Caco-2 (cell line): ENCODE measurements at regions of chr16 and their contacts with region 1.

Region 1: GRCh38 chr16:27367461-27368357 is 34.3 kb upstream of the IL21R start:
- DNase-seq: peak; percentile 75 to 78
- H3K4me3 ChIP-seq: no peak overlapping the region
- H3K4me3 Mint-ChIP-seq: peak overlapping the region; percentile 7
- H3K27ac Mint-ChIP-seq: no peak overlapping the region
- H3K4me1 ChIP-seq: peaks cover 30% of the 10 kb centered on the region
- H3K4me1 Mint-ChIP-seq: peaks cover 20% of the 10 kb centered on the region
- H3K27me3 ChIP-seq: no peaks in the 10 kb centered on the region
- H3K27me3 Mint-ChIP-seq: no peaks in the 10 kb centered on the region
- CTCF ChIP-seq: peak; percentile 72 to 81

Region 2: DNA sequence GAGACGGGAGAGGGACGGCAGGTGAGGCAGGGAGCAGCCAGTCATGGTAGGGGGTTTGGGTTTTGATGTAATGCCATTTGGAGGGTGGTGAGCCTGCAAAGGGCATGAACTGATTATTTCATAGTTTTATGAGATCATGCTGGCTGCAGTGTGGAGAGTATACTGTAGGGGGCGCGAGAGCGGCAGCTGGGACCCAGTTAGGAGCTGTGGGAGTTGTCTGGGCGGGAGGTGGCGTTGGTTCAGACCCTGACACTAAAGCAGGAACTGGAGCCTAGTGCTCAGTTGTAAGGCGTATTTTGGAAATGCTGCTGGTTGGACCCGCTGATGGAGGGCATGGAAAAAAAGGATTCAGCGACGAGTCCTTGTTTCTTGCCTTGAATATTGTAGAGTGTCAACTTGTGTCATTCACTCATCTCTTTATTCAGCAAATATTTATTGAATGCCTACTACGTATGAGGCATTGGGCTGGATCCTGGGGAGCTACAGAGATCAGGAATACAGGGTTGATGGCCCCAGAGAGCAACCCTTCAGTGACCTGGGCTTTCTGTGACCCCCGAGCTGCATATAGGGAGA is 188.1 kb before region 1 on chr16:
- CTCF ChIA-PET with region 1: interaction called, 12 read pairs
- POLR2A ChIA-PET with region 1: no interaction called
- intact Hi-C with region 1: no loop called
- DNase-seq: peak; percentile 52 to 57
- H3K4me3 ChIP-seq: no peak overlapping the region
- H3K4me3 Mint-ChIP-seq: no peak overlapping the region
- H3K27ac Mint-ChIP-seq: no peak overlapping the region
- H3K4me1 ChIP-seq: peaks cover 5% of the 10 kb centered on the region
- H3K4me1 Mint-ChIP-seq: peaks cover 5% of the 10 kb centered on the region
- H3K27me3 ChIP-seq: no peaks in the 10 kb centered on the region
- H3K27me3 Mint-ChIP-seq: peaks cover 10% of the 10 kb centered on the region
- CTCF ChIP-seq: peak; percentile 57 to 60

Region 3: DNA sequence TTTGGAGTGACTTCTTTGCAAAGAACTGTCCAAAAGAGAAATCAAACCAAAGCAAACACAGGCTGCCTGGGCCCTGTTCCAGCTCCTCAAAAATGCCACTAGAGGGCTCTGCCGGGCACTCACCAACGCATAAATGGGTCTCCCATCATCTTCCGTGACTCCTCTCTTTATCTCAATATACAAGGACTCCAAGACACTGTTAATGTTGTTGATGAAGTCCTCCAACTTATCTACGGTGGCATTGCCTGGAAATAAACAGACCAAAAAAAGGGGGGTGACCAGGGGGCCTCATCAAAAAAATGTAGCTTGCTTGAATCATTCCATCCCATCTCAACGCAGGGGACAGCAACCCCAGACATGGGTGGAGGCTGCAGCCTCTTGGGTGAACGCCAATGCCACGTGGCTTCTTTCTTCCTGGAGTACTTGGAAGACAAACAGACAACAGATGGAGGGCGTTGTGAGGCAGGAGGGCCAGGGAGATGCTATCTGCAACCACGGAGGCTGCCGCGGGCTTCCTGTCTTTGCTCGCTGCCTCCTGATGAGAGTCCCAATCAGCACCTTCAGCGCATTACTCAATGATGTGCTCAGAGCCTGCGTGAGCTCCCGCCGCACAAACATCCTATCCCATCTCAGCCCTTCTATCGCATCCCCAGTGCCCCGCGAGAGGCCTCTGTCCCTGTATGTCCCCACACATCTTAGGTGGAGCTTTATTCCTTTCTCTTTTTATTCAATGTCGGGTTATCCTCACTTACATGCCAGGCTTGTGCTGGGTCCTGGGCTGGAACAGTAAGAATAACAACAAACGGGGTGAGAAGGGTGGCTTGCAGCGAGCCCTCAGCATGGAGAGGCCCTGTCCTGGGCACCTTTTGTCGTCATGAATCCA is 132.4 kb before region 1 on chr16:
- CTCF ChIA-PET with region 1: interaction called, 22 read pairs
- POLR2A ChIA-PET with region 1: no interaction called
- intact Hi-C with region 1: loop called (anchors 1 kb)
- DNase-seq: peak in 1 of 2 experiments; percentile 50
- H3K4me3 ChIP-seq: no peak overlapping the region
- H3K4me3 Mint-ChIP-seq: no peak overlapping the region
- H3K27ac Mint-ChIP-seq: no peak overlapping the region
- H3K4me1 ChIP-seq: no peaks in the 10 kb centered on the region
- H3K4me1 Mint-ChIP-seq: peaks cover 9% of the 10 kb centered on the region
- H3K27me3 ChIP-seq: no peaks in the 10 kb centered on the region
- H3K27me3 Mint-ChIP-seq: no peaks in the 10 kb centered on the region
- CTCF ChIP-seq: peak; percentile 68 to 89

Region 4: GRCh38 chr16:27313422-27314160 is 54.1 kb before region 1 on chr16 and contains the start of gene IL4R:
- CTCF ChIA-PET with region 1: no interaction called
- POLR2A ChIA-PET with region 1: no interaction called
- intact Hi-C with region 1: loop called (anchors 2 kb)
- DNase-seq: peak; percentile 85 to 88
- H3K4me3 ChIP-seq: peak within 1 kb of the TSS; percentile 83
- H3K4me3 Mint-ChIP-seq: peak within 1 kb of the TSS; percentile 88
- H3K27ac Mint-ChIP-seq: peak within 1 kb of the TSS; percentile 90
- H3K4me1 ChIP-seq: peaks cover 32% of the 10 kb centered on the region
- H3K4me1 Mint-ChIP-seq: peaks cover 25% of the 10 kb centered on the region
- H3K27me3 ChIP-seq: no peaks in the 10 kb centered on the region
- H3K27me3 Mint-ChIP-seq: no peaks in the 10 kb centered on the region
- CTCF ChIP-seq: no peak
- total RNA-seq, gene IL4R: 32.6 and 34.4 TPM in 2 replicates

Region 5: DNA sequence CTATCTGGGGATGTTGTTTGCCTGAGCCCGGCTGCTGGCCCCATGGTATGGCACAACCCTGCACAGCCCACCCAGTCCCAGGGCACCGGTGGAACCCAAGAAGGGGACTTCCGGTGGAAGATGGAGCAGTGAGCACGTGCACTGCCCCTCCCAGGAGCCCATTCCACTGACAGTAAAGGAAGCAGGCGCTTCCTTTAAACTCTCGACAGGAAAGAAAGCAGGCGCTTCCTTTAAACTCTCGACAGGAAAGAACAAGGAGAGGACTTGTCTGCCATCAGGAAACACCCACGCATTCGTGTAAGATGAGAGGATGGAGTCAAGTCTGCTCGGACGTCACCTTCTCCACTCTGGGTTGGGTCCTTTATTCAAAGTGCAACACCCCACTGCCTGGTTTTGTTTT is 88.0 kb after region 1 on chr16:
- CTCF ChIA-PET with region 1: no interaction called
- POLR2A ChIA-PET with region 1: no interaction called
- intact Hi-C with region 1: loop called (anchors 5 kb)
- DNase-seq: no peak
- H3K4me3 ChIP-seq: no peak overlapping the region
- H3K4me3 Mint-ChIP-seq: no peak overlapping the region
- H3K27ac Mint-ChIP-seq: no peak overlapping the region
- H3K4me1 ChIP-seq: no peaks in the 10 kb centered on the region
- H3K4me1 Mint-ChIP-seq: no peaks in the 10 kb centered on the region
- H3K27me3 ChIP-seq: no peaks in the 10 kb centered on the region
- H3K27me3 Mint-ChIP-seq: no peaks in the 10 kb centered on the region
- CTCF ChIP-seq: no peak